Lower leg skin (tissue), 4 donors: ENCODE measurements at regions of chr12 and their contacts with region 1.

Region 1: DNA sequence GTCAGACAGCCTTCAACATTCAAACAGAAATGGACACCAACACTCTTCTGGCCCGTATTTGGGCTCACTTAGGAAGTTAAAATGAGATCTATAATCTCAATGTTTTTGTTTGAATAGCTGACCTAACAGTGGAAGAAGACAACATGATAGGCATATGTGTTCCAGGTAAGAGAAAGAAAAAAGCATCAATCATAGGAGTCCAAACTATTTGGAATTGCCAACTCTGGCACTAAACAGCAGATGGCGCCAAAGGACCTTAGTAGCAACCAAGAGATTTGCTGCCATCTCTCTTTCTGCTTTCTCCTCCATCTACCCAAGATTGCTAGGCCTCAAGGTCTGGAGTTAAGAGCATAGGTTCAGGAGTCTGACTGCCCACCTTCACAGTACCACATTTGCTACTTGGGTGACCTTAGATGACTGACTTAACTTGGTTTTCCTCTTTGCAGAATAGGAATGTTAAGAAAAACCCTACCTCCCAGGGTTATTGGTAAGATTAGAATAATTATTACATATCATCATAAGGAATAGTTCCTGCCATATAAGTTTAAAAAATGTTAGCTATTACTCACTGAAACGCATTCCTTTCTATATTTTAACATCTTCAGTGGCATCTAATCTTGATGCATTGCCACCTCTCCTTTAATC is 30.2 kb downstream of the PEX5 start:
- DNase-seq: peak; percentile 60 to 92
- H3K4me3 ChIP-seq: no peak overlapping the region
- CTCF ChIP-seq: no peak
- POLR2A ChIP-seq: no peak

Region 2: GRCh38 chr12:7460375-7461259 is 240.9 kb after region 1 on chr12:
- intact Hi-C with region 1: loop called (anchors 5 kb)
- DNase-seq: peak in 1 of 2 donors; percentile 43
- H3K4me3 ChIP-seq: no peak overlapping the region
- CTCF ChIP-seq: no peak
- POLR2A ChIP-seq: no peak

Region 3: GRCh38 chr12:7642876-7643309 is 423.2 kb after region 1 on chr12:
- intact Hi-C with region 1: loop called (anchors 5 kb)
- DNase-seq: no peak
- H3K4me3 ChIP-seq: no peak overlapping the region
- CTCF ChIP-seq: no peak
- POLR2A ChIP-seq: no peak